Upper lobe of right lung (tissue), 1 donor: ENCODE measurements at regions of chr5 and their contacts with region 1.

Region 1: GRCh38 chr5:57494104-57495098 is 11.8 kb upstream of the ACTBL2 start:
- DNase-seq: no peak
- ATAC-seq: peak; percentile 86
- H3K4me3 ChIP-seq: no peak overlapping the region
- H3K27ac ChIP-seq: peak overlapping the region; percentile 34
- H3K4me1 ChIP-seq: peaks cover 14% of the 10 kb centered on the region
- H3K27me3 ChIP-seq: no peaks in the 10 kb centered on the region
- CTCF ChIP-seq: no peak

Region 2: DNA sequence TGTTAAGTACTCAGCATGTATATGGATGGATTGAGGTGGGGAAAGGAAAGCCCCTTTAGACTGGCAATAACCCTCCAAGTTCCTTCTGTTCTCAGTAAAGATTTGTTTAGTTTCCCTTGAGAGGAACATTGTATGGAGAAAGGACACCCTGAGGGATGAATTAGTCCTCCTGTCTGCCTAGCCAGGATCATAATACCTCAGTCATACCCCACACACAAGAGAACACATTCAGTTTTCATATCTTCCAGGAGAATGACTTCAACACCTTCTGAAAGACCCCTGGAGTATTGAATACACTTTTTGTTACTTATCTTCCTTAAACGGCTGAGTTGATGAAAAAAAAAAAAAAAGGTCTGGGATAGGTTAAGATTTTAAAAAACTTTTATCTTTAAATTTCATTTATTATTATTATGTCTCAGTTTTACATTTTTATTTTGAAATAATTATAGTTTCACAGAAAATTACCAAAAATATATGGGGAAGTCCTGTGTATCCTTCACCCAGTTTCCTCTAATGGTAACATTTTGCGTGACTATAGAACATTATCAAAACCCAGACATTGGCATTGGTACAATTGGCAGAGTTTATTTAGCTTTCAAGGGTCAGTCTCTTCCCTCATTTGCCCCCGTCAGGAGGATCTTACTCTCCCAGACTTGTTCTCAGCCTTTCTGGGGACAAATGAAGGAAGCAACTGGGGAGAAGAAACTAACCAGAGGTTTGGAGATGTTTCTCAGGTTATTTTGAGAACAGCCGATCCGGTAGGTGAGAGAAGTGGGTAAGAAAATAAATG is 99.8 kb before region 1 on chr5:
- intact Hi-C with region 1: no loop called
- DNase-seq: no peak
- ATAC-seq: no peak
- H3K4me3 ChIP-seq: no peak overlapping the region
- H3K27ac ChIP-seq: no peak overlapping the region
- H3K4me1 ChIP-seq: no peaks in the 10 kb centered on the region
- H3K27me3 ChIP-seq: no peaks in the 10 kb centered on the region
- CTCF ChIP-seq: no peak

Region 3: DNA sequence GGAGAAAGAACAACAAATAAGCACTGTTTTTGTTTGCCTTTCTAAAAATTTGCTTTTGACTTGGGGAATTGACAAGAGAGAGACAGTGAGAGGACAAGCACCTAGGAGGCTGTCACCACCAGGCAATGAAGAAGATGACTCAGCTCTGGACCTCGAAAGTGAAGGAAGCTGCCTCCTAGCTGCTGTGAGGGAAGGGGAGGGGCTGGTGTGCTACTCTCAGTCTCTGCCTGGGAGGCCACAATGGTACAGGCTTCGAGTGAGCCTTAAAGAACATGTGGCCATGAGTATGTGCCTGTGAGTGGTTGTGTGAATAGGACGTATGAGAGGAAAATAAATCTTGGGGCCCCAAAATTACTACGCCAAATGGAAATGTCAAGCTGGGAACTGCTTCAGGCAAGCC is 972.5 kb after region 1 on chr5:
- intact Hi-C with region 1: loop called (anchors 5 kb)
- DNase-seq: no peak
- ATAC-seq: peak; percentile 80
- H3K4me3 ChIP-seq: no peak overlapping the region
- H3K27ac ChIP-seq: no peak overlapping the region
- H3K4me1 ChIP-seq: no peaks in the 10 kb centered on the region
- H3K27me3 ChIP-seq: no peaks in the 10 kb centered on the region
- CTCF ChIP-seq: no peak